Activated CD8-positive, alpha-beta T cell treated with anti-CD3 and anti-CD28 coated beads, Interleukin-2, amount 10 ng/mL, durations not matched to agents 7 days and 5 days (primary cell): ENCODE measurements at regions of chr6 and their contacts with region 1.

Region 1: DNA sequence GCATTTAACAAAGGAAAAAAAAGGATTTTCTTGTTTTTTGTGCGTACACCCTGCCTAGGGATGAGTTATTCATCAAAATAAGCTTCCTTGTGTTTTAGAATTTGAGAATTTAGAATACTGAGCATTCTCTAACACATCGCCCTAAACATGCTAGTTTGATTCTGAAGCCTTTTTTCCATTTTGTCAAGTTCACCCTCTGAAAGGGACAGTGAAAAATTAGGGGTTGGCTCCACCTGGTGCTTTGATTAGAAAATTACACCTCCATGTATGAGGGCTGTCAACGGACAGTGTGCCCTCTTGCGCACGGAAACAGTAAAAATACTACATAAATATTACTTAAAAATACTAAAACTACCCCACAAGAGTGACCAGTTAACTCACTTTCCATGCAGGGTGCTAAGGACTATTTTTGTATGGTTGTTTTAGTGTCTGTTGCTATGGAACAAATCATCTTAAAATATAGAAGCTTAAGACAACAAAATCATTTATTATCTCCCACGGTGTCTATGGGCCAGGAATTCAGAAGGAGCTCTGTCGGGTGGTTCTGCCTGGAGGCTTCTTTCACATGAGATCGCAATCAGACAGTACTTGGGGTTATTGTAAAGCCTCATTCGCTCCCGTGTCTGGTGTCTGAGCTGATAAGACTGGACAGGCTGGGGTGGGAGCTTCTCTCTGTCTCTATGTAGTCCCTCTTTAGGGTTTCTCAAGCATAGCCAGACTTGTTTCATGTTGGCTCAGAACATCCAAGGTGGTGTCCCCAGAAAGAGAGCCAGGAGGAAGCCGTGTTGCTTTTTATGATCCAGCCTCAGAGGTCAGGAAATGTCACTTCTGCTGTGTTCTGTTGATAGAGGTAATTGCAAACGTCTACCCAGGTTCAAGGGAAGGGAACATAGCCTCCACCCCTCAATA is 41.1 kb upstream of the TMEM170B start:
- DNase-seq: peak; percentile 86
- ATAC-seq: peak; percentile 88
- H3K4me3 Mint-ChIP-seq: no peak overlapping the region
- H3K27ac Mint-ChIP-seq: no peak overlapping the region
- H3K4me1 Mint-ChIP-seq: peaks cover 10% of the 10 kb centered on the region
- H3K27me3 Mint-ChIP-seq: no peaks in the 10 kb centered on the region

Region 2: DNA sequence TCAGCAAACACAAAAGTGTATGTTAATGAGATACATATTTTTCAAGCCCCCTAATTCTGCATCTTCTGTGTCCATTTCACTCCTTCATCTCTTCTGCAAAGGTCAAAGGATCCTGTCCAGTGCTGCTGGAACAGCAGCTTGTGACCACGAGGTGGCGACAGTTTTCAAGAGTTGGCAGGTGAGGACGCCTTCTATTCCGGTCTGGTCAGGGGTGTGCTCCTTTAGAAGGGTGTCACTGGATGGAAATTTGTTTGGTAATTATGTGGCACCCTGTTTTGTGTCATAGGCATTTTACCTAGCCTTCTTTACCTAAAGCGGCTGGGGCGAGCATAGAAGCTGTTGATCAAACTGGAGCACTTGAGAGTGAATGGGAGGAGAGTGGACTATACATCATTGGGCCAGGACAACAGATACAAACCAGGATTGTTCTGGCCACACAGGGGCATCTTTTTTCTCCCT is 352.0 kb before region 1 on chr6:
- CTCF ChIA-PET with region 1: interaction called, 102 read pairs
- POLR2A ChIA-PET with region 1: interaction called, 5 read pairs
- DNase-seq: peak; percentile 83
- ATAC-seq: peak; percentile 91
- H3K4me3 Mint-ChIP-seq: no peak overlapping the region
- H3K27ac Mint-ChIP-seq: no peak overlapping the region
- H3K4me1 Mint-ChIP-seq: peaks cover 2% of the 10 kb centered on the region
- H3K27me3 Mint-ChIP-seq: no peaks in the 10 kb centered on the region

Region 3: GRCh38 chr6:11194356-11195218 is 301.8 kb before region 1 on chr6:
- CTCF ChIA-PET with region 1: interaction called, 12 read pairs
- POLR2A ChIA-PET with region 1: no interaction called
- DNase-seq: no peak
- ATAC-seq: no peak
- H3K4me3 Mint-ChIP-seq: no peak overlapping the region
- H3K27ac Mint-ChIP-seq: no peak overlapping the region
- H3K4me1 Mint-ChIP-seq: peaks cover 52% of the 10 kb centered on the region
- H3K27me3 Mint-ChIP-seq: no peaks in the 10 kb centered on the region

Region 4: DNA sequence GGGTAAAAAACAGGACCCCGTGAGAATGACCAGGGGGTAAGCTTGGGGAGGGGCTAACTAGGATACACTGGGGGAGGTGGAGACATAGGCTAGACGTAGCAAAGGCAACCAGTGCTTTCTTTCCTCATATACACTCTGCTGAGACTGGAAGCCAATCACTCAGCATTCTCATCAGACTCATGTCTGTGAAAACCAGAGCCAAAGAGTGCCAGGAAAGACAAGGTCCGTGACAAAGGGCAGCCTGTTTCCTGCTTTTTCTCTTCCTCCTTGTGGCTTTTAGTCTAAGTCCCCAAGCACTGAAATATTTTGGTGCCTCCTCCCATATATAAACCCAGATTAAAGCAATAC is 166.0 kb before region 1 on chr6:
- CTCF ChIA-PET with region 1: interaction called, 15 read pairs
- POLR2A ChIA-PET with region 1: interaction called, 4 read pairs
- DNase-seq: no peak
- ATAC-seq: peak; percentile 50
- H3K4me3 Mint-ChIP-seq: no peak overlapping the region
- H3K27ac Mint-ChIP-seq: peak overlapping the region; percentile 62
- H3K4me1 Mint-ChIP-seq: peaks cover 54% of the 10 kb centered on the region
- H3K27me3 Mint-ChIP-seq: no peaks in the 10 kb centered on the region

Region 5: DNA sequence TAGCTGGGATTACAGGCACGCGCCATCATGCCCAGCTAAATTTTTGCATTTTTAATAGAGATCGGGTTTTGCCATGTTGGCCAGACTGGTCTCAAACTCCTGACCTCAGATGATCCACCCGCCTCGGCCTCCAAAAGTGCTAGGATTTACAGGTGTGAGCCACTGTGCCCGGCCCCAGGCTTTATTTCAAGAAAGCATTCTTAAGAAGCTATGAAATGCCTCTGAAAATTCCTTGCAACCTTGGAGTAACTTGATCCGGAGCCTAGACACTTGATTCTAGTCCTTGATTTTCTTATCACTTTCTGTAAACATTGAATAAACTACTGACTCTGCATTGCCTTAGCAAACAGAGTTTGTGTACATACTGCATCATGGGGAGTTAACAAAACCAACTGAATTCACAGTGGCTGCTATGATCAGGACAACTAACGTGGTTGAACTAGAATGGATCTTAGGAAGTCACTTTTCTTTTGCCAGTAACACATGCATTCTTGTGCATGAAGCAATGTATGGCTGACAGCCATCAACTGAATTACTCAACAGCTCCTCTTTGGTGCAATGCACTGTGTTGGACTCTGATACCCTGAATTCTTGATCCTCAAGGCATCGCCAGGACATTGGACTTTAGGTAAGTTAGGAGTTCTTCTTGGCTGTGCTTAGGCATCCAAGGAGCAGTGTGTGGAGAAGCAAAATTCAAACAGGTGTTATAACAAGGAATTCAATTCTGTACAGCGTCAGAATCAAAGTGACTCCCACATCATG is 61.7 kb before region 1 on chr6:
- CTCF ChIA-PET with region 1: interaction called, 16 read pairs
- POLR2A ChIA-PET with region 1: no interaction called
- DNase-seq: no peak
- ATAC-seq: no peak
- H3K4me3 Mint-ChIP-seq: no peak overlapping the region
- H3K27ac Mint-ChIP-seq: no peak overlapping the region
- H3K4me1 Mint-ChIP-seq: peaks cover 21% of the 10 kb centered on the region
- H3K27me3 Mint-ChIP-seq: no peaks in the 10 kb centered on the region